ENCODE measurements at regions of chr6 and their contacts with region 1.

Region 1: GRCh38 chr6:112780498-112781096 is 433.5 kb downstream of the RFPL4B start:
- DNase-seq: peak; percentile 63
- H3K4me3 ChIP-seq: no peak overlapping the region
- H3K27ac ChIP-seq: no peak overlapping the region
- H3K4me1 ChIP-seq: no peaks in the 10 kb centered on the region
- CTCF ChIP-seq: peak; percentile 92

Region 2: DNA sequence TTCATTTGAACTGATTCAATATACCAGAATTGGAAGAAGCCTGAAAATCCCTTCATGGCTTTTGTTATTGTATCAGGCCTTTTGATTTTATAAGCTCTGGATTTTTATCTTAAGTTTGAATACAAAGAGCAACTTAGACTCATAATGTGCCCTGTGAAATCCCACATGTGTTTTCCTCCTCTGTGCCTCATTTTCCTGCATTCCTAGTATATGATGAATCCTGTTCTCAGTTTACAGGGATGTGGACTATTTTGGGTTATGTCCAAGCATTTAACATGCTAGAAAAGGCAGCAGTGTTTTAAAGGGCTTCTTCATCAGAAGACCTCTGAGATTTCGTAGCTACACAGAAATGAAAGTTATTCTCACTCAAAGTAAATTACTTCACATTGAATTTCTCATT is 21.5 kb after region 1 on chr6:
- CTCF ChIA-PET with region 1: no interaction called
- POLR2A ChIA-PET with region 1: no interaction called
- intact Hi-C with region 1: no loop called
- DNase-seq: no peak
- H3K4me3 ChIP-seq: no peak overlapping the region
- H3K27ac ChIP-seq: no peak overlapping the region
- H3K4me1 ChIP-seq: no peaks in the 10 kb centered on the region
- CTCF ChIP-seq: no peak

Region 3: GRCh38 chr6:113306552-113307145 is 526.1 kb after region 1 on chr6:
- CTCF ChIA-PET with region 1: no interaction called
- POLR2A ChIA-PET with region 1: no interaction called
- intact Hi-C with region 1: loop called (anchors 10 kb)
- DNase-seq: peak; percentile 43
- H3K4me3 ChIP-seq: no peak overlapping the region
- H3K27ac ChIP-seq: no peak overlapping the region
- H3K4me1 ChIP-seq: no peaks in the 10 kb centered on the region
- CTCF ChIP-seq: peak; percentile 75

Region 4: GRCh38 chr6:113909234-113909856 is 1128.7 kb after region 1 on chr6:
- CTCF ChIA-PET with region 1: no interaction called
- POLR2A ChIA-PET with region 1: no interaction called
- intact Hi-C with region 1: loop called (anchors 1 kb)
- DNase-seq: peak; percentile 68
- H3K4me3 ChIP-seq: no peak overlapping the region
- H3K27ac ChIP-seq: no peak overlapping the region
- H3K4me1 ChIP-seq: no peaks in the 10 kb centered on the region
- CTCF ChIP-seq: peak; percentile 89